ENCODE measurements at regions of chr16 and their contacts with region 1.

Region 1: GRCh38 chr16:76653390-76654026 is 376.3 kb downstream of the CNTNAP4 start:
- DNase-seq: no peak
- ATAC-seq: peak in 1 of 2 donors; percentile 47

Region 2: GRCh38 chr16:75794426-75794825 is 859.1 kb before region 1 on chr16:
- intact Hi-C with region 1: loop called in 1 of 2 experiments (anchors 10 kb)
- DNase-seq: no peak
- ATAC-seq: no peak

Region 3: GRCh38 chr16:76278980-76279379 is 374.5 kb before region 1 on chr16:
- intact Hi-C with region 1: loop called in 1 of 2 experiments (anchors 5 kb)
- DNase-seq: no peak
- ATAC-seq: peak in 1 of 2 donors; percentile 30